HEK293 (cell line): ENCODE measurements at regions of chr18 and their contacts with region 1.

Region 1: GRCh38 chr18:21257386-21257785 is 15.4 kb downstream of the GREB1L start:
- H3K4me3 ChIP-seq: no peak overlapping the region
- H3K27ac ChIP-seq: no peak overlapping the region
- H3K4me1 ChIP-seq: peaks cover 15% of the 10 kb centered on the region
- CTCF ChIP-seq: no peak

Region 2: DNA sequence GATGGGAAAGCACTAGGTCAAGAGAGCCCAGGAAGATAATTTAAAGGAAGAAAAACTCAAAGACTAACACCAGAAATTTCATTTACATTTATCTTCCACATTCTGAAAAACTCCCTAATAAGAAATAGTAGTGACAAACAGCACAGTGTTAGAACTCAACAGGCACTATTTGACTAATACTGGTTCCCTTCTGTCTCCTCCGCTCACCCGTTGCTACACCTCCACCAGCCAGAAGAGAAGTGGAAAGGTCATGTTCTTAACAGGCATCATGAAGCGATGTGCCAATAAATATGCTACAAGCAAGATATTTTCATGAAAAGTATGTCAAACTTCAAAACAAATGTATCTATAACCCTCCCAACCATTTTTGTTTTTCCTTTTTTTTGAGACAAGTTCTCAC is 151.4 kb before region 1 on chr18:
- CTCF ChIA-PET with region 1: no interaction called
- POLR2A ChIA-PET with region 1: no interaction called
- H3K4me3 ChIP-seq: no peak overlapping the region
- H3K27ac ChIP-seq: no peak overlapping the region
- H3K4me1 ChIP-seq: peaks cover 17% of the 10 kb centered on the region
- CTCF ChIP-seq: no peak

Region 3: DNA sequence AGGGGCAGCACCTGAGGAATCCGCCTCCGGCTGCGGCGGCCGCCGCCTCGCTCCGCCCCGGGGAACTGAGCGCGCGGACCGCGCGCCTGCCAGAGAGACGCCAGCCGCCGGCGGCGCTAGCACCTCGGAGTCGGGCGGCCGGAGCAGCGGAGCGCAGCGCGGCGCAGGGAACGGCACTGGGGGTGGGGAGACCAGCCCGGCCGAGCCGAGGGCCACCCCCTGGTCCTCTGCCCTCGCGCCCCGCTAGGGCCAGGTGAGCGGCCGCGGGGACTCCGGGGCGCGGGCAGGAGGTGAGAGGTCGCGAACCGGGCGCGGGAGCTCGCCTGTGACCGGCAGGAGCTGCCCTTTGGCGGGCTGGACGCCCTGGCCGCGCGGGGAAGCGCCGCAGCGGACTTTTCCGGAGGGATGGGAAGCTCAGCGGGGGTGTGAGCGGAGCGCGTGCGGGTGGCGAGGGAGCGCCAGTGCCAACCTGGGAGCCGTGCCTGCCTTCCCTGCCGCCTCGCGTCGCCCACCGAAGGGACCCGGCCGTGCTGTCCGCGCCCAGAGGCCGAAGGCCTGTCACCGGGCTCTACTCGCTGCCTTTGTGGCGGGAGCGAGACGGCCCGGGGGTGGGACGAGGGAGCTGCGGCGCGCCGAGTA is 15.1 kb before region 1 on chr18 and contains the start of gene GREB1L:
- CTCF ChIA-PET with region 1: interaction called, 5 read pairs
- POLR2A ChIA-PET with region 1: interaction called, 10 read pairs
- H3K4me3 ChIP-seq: peak within 1 kb of the TSS; percentile 64
- H3K27ac ChIP-seq: peak within 1 kb of the TSS; percentile 95
- H3K4me1 ChIP-seq: peaks cover 16% of the 10 kb centered on the region
- CTCF ChIP-seq: peak; percentile 30; the same call in 1 of the 2 replicates